ENCODE measurements at regions of chr3 and their contacts with region 1.

Region 1: DNA sequence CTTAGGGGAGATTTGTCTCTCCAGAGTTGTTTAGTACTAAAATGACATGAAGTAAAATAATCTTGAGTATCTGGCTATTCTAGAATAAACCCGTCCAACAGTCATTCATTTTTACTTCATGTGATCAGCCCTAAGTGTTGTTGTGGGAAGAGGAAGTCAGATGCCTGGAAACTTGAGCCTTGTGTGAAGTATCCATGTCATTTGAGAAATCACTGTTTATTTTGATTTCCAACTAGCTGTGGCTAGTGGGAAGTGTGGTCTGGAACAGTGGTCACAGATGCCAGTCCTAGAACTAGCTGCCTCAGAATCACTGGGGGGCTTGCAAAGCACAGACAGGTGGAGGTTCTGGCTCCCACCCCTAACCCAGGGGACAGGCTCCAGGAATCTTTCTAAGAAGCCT is 77.7 kb upstream of the LIMD1 start:
- DNase-seq: no peak
- H3K4me3 ChIP-seq: no peak overlapping the region
- H3K27ac ChIP-seq: no peak overlapping the region
- H3K4me1 ChIP-seq: no peaks in the 10 kb centered on the region
- H3K27me3 ChIP-seq: no peaks in the 10 kb centered on the region
- CTCF ChIP-seq: no peak

Region 2: DNA sequence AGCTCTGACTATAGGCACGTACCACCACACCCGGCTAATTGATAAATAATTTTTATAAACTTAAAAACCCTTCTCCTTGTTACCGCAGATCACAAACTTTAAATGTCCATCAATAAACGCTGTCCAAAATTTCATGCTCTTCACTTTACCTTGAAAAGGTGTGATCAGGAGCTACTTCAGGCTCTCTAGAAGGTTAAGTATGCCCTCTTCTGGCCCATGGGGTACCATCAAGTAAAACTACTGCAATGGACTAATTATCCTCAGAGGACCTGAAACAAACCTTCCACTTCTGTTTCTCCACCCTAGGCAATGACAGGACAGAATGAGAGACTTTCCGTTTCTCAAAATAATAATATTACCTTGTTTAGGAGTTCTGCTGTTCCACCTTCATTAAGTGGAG is 315.9 kb after region 1 on chr3:
- intact Hi-C with region 1: loop called (anchors 10 kb)
- DNase-seq: no peak
- H3K4me3 ChIP-seq: no peak overlapping the region
- H3K27ac ChIP-seq: no peak overlapping the region
- H3K4me1 ChIP-seq: no peaks in the 10 kb centered on the region
- H3K27me3 ChIP-seq: no peaks in the 10 kb centered on the region
- CTCF ChIP-seq: no peak

Region 3: GRCh38 chr3:45929042-45929679 is 412.3 kb after region 1 on chr3:
- intact Hi-C with region 1: loop called (anchors 10 kb)
- DNase-seq: no peak
- H3K4me3 ChIP-seq: no peak overlapping the region
- H3K27ac ChIP-seq: no peak overlapping the region
- H3K4me1 ChIP-seq: no peaks in the 10 kb centered on the region
- H3K27me3 ChIP-seq: no peaks in the 10 kb centered on the region
- CTCF ChIP-seq: peak; percentile 31 to 37 (median 34)

Measured in ascending aorta (tissue), 2 donors.